Aorta (tissue), 5 donors: ENCODE measurements at regions of chr15 and their contacts with region 1.

Region 1: DNA sequence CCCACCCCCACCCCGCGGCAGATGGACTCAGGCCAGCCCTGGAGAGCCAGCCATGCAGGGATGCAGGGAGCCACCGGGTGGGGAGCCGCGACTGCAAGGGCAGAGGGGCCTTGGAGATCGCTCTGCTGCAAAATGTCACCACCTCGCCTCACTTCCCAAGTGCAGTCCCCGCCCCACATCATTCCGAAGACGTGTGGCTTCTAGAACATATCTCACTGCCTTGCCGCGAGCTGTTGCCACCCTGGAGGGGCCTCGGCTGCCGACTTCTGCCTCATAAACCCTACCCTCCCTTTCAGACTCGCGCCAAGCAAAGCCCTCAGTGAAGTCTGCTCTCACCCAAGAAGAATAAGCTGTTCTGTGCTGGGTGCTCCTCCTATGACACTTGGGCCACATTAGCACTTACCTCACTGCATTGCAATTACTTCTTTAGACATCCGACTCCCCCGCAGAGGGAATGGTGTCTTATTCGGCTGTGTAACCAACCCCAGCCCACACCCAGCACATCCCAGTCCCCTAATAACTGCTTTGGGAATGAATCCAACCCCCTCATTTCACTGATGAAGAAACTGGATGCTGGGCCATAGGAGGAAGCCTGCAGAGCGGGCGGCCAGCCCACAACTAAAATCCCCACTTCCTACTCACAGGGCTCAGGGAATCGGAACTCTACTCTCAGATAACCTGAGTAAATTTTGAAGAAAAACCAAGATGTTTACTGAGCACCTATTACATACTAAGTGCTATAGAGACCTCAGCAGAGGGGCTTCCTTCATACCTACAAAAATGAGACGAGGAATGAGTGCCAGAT is 8.6 kb downstream of the TLE3 start:
- DNase-seq: no peak
- ATAC-seq: no peak
- H3K4me3 ChIP-seq: no peak overlapping the region
- H3K27ac ChIP-seq: no peak overlapping the region
- H3K4me1 ChIP-seq: peaks cover 0 to 2% of the 10 kb centered on the region in 2 donors
- H3K27me3 ChIP-seq: no peaks in the 10 kb centered on the region

Region 2: GRCh38 chr15:69576035-69576526 is 513.0 kb before region 1 on chr15:
- intact Hi-C with region 1: loop called in 1 of 2 experiments (anchors 5 kb)
- DNase-seq: peak; percentile 79 to 86
- ATAC-seq: peak; percentile 79
- H3K4me3 ChIP-seq: no peak overlapping the region
- H3K27ac ChIP-seq: no peak overlapping the region
- H3K4me1 ChIP-seq: no peaks in the 10 kb centered on the region
- H3K27me3 ChIP-seq: no peaks in the 10 kb centered on the region

Region 3: GRCh38 chr15:69782809-69783208 is 306.3 kb before region 1 on chr15:
- intact Hi-C with region 1: no loop called
- DNase-seq: no peak
- ATAC-seq: no peak
- H3K4me3 ChIP-seq: no peak overlapping the region
- H3K27ac ChIP-seq: no peak overlapping the region
- H3K4me1 ChIP-seq: no peaks in the 10 kb centered on the region
- H3K27me3 ChIP-seq: no peaks in the 10 kb centered on the region

Region 4: DNA sequence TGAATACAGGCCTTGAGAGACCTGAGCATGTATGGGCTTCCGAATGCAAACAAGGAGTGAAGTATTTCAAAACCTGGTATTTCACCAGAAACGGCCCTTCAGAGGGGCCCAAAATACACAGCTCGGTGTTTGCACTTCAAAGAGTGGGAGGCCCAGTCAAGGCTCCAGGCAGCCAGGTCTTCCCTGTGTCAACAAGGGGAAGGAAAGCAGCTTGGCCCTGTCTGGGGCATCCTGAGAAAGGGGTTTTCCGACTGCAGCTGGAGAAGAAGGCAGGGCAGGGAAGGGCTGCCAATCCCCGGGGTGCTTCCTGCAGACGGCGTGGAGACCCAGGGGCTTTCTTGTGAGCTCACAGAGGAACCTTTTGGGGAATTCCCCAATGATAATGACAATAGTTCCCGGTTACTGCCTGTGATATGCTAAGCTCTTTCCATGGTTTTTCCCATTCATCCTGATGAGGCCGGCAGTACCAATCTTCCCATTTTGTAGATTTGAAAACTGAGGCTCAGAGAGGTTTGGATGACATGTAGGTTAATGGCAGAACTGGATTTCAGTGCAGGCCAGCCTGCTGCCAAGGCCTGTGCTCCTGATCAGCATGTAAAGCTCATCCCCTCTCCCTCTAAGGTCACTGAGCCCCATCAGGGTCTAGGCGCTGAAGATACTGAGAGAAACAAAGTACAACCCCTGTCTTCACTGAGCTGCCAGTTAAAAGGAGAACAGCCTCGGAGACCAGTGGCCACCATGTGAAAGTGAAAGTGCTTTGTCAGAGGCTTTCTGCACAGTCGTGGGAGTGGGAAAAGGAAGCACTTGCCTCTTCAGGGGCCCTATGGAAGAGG is 51.7 kb after region 1 on chr15:
- intact Hi-C with region 1: no loop called
- DNase-seq: peak in 1 of 2 donors; percentile 67
- ATAC-seq: peak; percentile 48
- H3K4me3 ChIP-seq: no peak overlapping the region
- H3K27ac ChIP-seq: no peak overlapping the region
- H3K4me1 ChIP-seq: no peaks in the 10 kb centered on the region
- H3K27me3 ChIP-seq: no peaks in the 10 kb centered on the region

Region 5: GRCh38 chr15:70214267-70214666 is 125.2 kb after region 1 on chr15:
- intact Hi-C with region 1: no loop called
- DNase-seq: no peak
- ATAC-seq: no peak
- H3K4me3 ChIP-seq: no peak overlapping the region
- H3K27ac ChIP-seq: no peak overlapping the region
- H3K4me1 ChIP-seq: no peaks in the 10 kb centered on the region
- H3K27me3 ChIP-seq: no peaks in the 10 kb centered on the region